IMR-90 (cell line): ENCODE measurements at regions of chr16 and their contacts with region 1.

Region 1: GRCh38 chr16:48623304-48624016 is 13.5 kb upstream of the N4BP1 start:
- DNase-seq: peak; percentile 75
- ATAC-seq: peak; percentile 99
- H3K4me3 ChIP-seq: peak overlapping the region; percentile 35
- H3K27ac ChIP-seq: peak overlapping the region; percentile 36
- H3K4me1 ChIP-seq: no peaks in the 10 kb centered on the region; the same call in 1 of the 2 replicates
- H3K27me3 ChIP-seq: no peaks in the 10 kb centered on the region; the same call in 1 of the 2 replicates
- CTCF ChIP-seq: peak; percentile 98
- POLR2A ChIP-seq: peak; percentile 58; the same call in 1 of the 2 replicates
- RAD21 ChIP-seq: peak; percentile 97

Region 2: GRCh38 chr16:48231727-48232492 is 391.6 kb before region 1 on chr16:
- CTCF ChIA-PET with region 1: interaction called, 7 read pairs
- POLR2A ChIA-PET with region 1: interaction called, 3 read pairs
- dilution Hi-C with region 1: no loop called
- in situ Hi-C with region 1: loop called (anchors 5 kb)
- intact Hi-C with region 1: loop called (anchors 2 kb)
- DNase-seq: peak; percentile 49
- ATAC-seq: peak; percentile 91
- H3K4me3 ChIP-seq: no peak overlapping the region
- H3K27ac ChIP-seq: no peak overlapping the region
- H3K4me1 ChIP-seq: 0 out of 2 replicates have a peak, but pooled peaks cover 1% of the 10 kb centered on the region
- H3K27me3 ChIP-seq: peaks cover 6% of the 10 kb centered on the region
- CTCF ChIP-seq: peak; percentile 63
- POLR2A ChIP-seq: no peak
- RAD21 ChIP-seq: peak; percentile 63

Region 3: GRCh38 chr16:48353565-48354163 is 269.8 kb before region 1 on chr16:
- CTCF ChIA-PET with region 1: interaction called, 28 read pairs
- POLR2A ChIA-PET with region 1: no interaction called
- dilution Hi-C with region 1: no loop called
- in situ Hi-C with region 1: loop called (anchors 5 kb)
- intact Hi-C with region 1: loop called (anchors 1 kb)
- DNase-seq: peak; percentile 75
- ATAC-seq: peak; percentile 84
- H3K4me3 ChIP-seq: no peak overlapping the region
- H3K27ac ChIP-seq: no peak overlapping the region
- H3K4me1 ChIP-seq: no peaks in the 10 kb centered on the region
- H3K27me3 ChIP-seq: no peaks in the 10 kb centered on the region
- CTCF ChIP-seq: peak; percentile 97
- POLR2A ChIP-seq: no peak
- RAD21 ChIP-seq: peak; percentile 87

Region 4: GRCh38 chr16:48385272-48386150 is 237.9 kb before region 1 on chr16 and contains the start of gene SIAH1:
- CTCF ChIA-PET with region 1: interaction called, 11 read pairs
- POLR2A ChIA-PET with region 1: no interaction called
- dilution Hi-C with region 1: no loop called
- in situ Hi-C with region 1: no loop called
- intact Hi-C with region 1: no loop called
- DNase-seq: peak; percentile 68
- ATAC-seq: peak; percentile 84
- H3K4me3 ChIP-seq: peak within 1 kb of the TSS; percentile 95
- H3K27ac ChIP-seq: peak within 1 kb of the TSS; percentile 98
- H3K4me1 ChIP-seq: peaks cover 1% of the 10 kb centered on the region; the same call in 1 of the 2 replicates
- H3K27me3 ChIP-seq: no peaks in the 10 kb centered on the region
- CTCF ChIP-seq: no peak
- POLR2A ChIP-seq: peak; percentile 61
- RAD21 ChIP-seq: no peak; the same call in 1 of the 2 replicates
- total RNA-seq, gene SIAH1: 16.9 and 17.7 TPM in 2 replicates

Region 5: GRCh38 chr16:48556913-48557351 is 66.5 kb before region 1 on chr16:
- CTCF ChIA-PET with region 1: interaction called, 6 read pairs
- POLR2A ChIA-PET with region 1: no interaction called
- dilution Hi-C with region 1: no loop called
- in situ Hi-C with region 1: no loop called
- intact Hi-C with region 1: loop called (anchors 5 kb)
- DNase-seq: peak; percentile 89
- ATAC-seq: peak; percentile 73
- H3K4me3 ChIP-seq: no peak overlapping the region
- H3K27ac ChIP-seq: no peak overlapping the region
- H3K4me1 ChIP-seq: peaks cover 23% of the 10 kb centered on the region
- H3K27me3 ChIP-seq: no peaks in the 10 kb centered on the region
- CTCF ChIP-seq: no peak
- POLR2A ChIP-seq: no peak
- RAD21 ChIP-seq: no peak

Region 6: GRCh38 chr16:48870141-48870540 is 246.7 kb after region 1 on chr16:
- CTCF ChIA-PET with region 1: no interaction called
- POLR2A ChIA-PET with region 1: no interaction called
- dilution Hi-C with region 1: no loop called
- in situ Hi-C with region 1: no loop called
- intact Hi-C with region 1: no loop called
- DNase-seq: no peak
- ATAC-seq: no peak
- H3K4me3 ChIP-seq: no peak overlapping the region
- H3K27ac ChIP-seq: no peak overlapping the region
- H3K4me1 ChIP-seq: no peaks in the 10 kb centered on the region
- H3K27me3 ChIP-seq: no peaks in the 10 kb centered on the region
- CTCF ChIP-seq: no peak
- POLR2A ChIP-seq: no peak
- RAD21 ChIP-seq: no peak